ENCODE measurements at regions of chr18 and their contacts with region 1.

Region 1: GRCh38 chr18:67453901-67454300 is 62.6 kb downstream of the DSEL start:
- DNase-seq: no peak
- ATAC-seq: no peak
- H3K4me3 Mint-ChIP-seq: no peak overlapping the region
- H3K27ac Mint-ChIP-seq: no peak overlapping the region
- H3K4me1 Mint-ChIP-seq: peaks cover 11% of the 10 kb centered on the region
- H3K27me3 Mint-ChIP-seq: no peaks in the 10 kb centered on the region

Region 2: DNA sequence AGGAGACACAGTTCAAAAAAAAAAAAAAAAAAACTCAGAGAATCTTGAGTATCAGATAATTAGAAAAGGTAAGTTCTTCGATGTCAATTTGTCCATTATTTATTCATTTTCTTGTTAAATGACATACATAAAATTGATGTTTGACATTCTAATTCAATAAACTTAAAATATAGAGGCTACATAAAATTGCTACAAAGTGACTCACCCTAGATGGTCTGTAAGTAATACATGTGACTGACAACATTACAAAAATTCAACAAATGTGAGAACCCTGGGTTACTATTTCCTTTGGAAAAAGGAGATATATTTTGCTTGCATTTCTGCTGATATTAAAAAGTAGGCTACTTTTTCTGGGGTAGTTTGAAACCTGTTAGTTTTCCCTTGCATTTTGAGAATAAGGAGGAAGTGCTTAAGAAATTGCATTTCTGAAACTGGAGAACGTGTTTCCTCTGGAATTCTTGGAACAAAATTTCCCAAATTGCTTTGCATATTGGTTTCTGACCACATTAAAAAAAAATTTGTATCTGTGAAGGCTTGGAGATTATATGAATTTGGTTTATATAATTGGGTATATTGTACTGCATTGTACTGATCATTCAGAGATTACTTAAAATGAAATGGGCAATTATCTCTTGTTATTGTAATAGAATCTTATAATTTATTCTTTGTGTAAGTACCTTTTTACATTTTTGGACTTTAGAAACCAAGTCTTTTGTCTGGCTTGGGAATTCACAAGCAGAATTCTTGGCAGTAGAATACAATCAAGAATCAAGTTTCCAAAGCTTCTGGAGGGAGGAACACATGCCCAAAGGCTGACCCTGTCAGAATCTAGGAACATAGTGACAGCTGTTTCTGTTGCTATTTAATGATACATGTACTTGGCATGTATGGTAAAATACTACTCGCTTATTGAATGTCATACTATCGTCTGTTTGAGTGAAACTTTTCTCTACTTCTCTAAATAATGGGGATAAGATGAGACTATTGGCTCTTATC is 43.5 kb before region 1 on chr18:
- CTCF ChIA-PET with region 1: no interaction called
- POLR2A ChIA-PET with region 1: no interaction called
- intact Hi-C with region 1: loop called in 1 of 2 experiments (anchors 5 kb)
- DNase-seq: no peak
- ATAC-seq: no peak
- H3K4me3 Mint-ChIP-seq: no peak overlapping the region
- H3K27ac Mint-ChIP-seq: no peak overlapping the region
- H3K4me1 Mint-ChIP-seq: no peaks in the 10 kb centered on the region
- H3K27me3 Mint-ChIP-seq: no peaks in the 10 kb centered on the region

Measured in activated CD4-positive, alpha-beta T cell treated with anti-CD3 and anti-CD28 coated beads for 36 hours (primary cell).